Naive thymus-derived CD4-positive, alpha-beta T cell (primary cell): ENCODE measurements at regions of chr12 and their contacts with region 1.

Region 1: GRCh38 chr12:53065975-53066931 is 12.9 kb downstream of the SPRYD3 start:
- DNase-seq: peak; percentile 36 to 72 (median 51)
- ATAC-seq: peak; percentile 80
- H3K4me3 ChIP-seq: no peak overlapping the region
- H3K4me3 Mint-ChIP-seq: no peak overlapping the region
- H3K27ac ChIP-seq: no peak overlapping the region
- H3K27ac Mint-ChIP-seq: peak overlapping the region in 4 of 9 donors; percentile 26 to 74 (median 50)
- H3K4me1 ChIP-seq: peaks cover 0 to 3% of the 10 kb centered on the region in 2 donors
- H3K4me1 Mint-ChIP-seq: peaks cover 0 to 21% (median 11%) of the 10 kb centered on the region in 7 donors
- H3K27me3 ChIP-seq: no peaks in the 10 kb centered on the region
- H3K27me3 Mint-ChIP-seq: no peaks in the 10 kb centered on the region

Region 2: GRCh38 chr12:53047221-53048042 is 18.8 kb before region 1 on chr12:
- CTCF ChIA-PET with region 1: interaction called, 5 read pairs
- POLR2A ChIA-PET with region 1: interaction called, 3 read pairs
- intact Hi-C with region 1: loop called in 1 of 2 experiments (anchors 2 kb)
- DNase-seq: peak; percentile 53 to 86 (median 70)
- ATAC-seq: peak; percentile 91
- H3K4me3 ChIP-seq: peak overlapping the region; percentile 82
- H3K4me3 Mint-ChIP-seq: peak overlapping the region in 9 of 10 donors; percentile 43 to 95 (median 76)
- H3K27ac ChIP-seq: peak overlapping the region; percentile 78
- H3K27ac Mint-ChIP-seq: peak overlapping the region in 6 of 9 donors; percentile 12 to 92 (median 82)
- H3K4me1 ChIP-seq: peaks cover 7 to 9% of the 10 kb centered on the region in 2 donors
- H3K4me1 Mint-ChIP-seq: peaks cover 0 to 24% (median 13%) of the 10 kb centered on the region in 7 donors
- H3K27me3 ChIP-seq: no peaks in the 10 kb centered on the region
- H3K27me3 Mint-ChIP-seq: peaks cover 0 to 13% (median 0%) of the 10 kb centered on the region in 5 donors

Region 3: GRCh38 chr12:53079226-53080117 is 13.2 kb after region 1 on chr12 and contains the start of gene SPRYD3:
- CTCF ChIA-PET with region 1: interaction called, 27 read pairs
- POLR2A ChIA-PET with region 1: interaction called, 12 read pairs
- intact Hi-C with region 1: loop called (anchors 1 kb)
- DNase-seq: peak; percentile 96 to 99 (median 97)
- ATAC-seq: peak; percentile 99
- H3K4me3 ChIP-seq: peak within 1 kb of the TSS; percentile 95
- H3K4me3 Mint-ChIP-seq: peak within 1 kb of the TSS; percentile 90 to 98 (median 92)
- H3K27ac ChIP-seq: peak within 1 kb of the TSS; percentile 93
- H3K27ac Mint-ChIP-seq: peak within 1 kb of the TSS; percentile 95 to 98 (median 96)
- H3K4me1 ChIP-seq: peaks cover 10 to 14% of the 10 kb centered on the region in 2 donors
- H3K4me1 Mint-ChIP-seq: peaks cover 26 to 53% (median 40%) of the 10 kb centered on the region in 7 donors
- H3K27me3 ChIP-seq: no peaks in the 10 kb centered on the region
- H3K27me3 Mint-ChIP-seq: peaks cover 0 to 3% (median 0%) of the 10 kb centered on the region in 5 donors
- total RNA-seq, gene SPRYD3: 33.0 to 48.0 (median 36.4) TPM

Region 4: GRCh38 chr12:53205747-53206419 is 139.6 kb after region 1 on chr12:
- CTCF ChIA-PET with region 1: interaction called, 3 read pairs
- POLR2A ChIA-PET with region 1: no interaction called
- intact Hi-C with region 1: loop called in 1 of 2 experiments (anchors 5 kb)
- DNase-seq: peak in 1 of 9 donors; percentile 75
- ATAC-seq: peak; percentile 68
- H3K4me3 ChIP-seq: peak overlapping the region; percentile 84
- H3K4me3 Mint-ChIP-seq: peak overlapping the region; percentile 83 to 92 (median 86)
- H3K27ac ChIP-seq: peak overlapping the region; percentile 85
- H3K27ac Mint-ChIP-seq: peak overlapping the region; percentile 61 to 90 (median 87)
- H3K4me1 ChIP-seq: peaks cover 63 to 73% of the 10 kb centered on the region in 2 donors
- H3K4me1 Mint-ChIP-seq: peaks cover 53 to 84% (median 71%) of the 10 kb centered on the region in 7 donors
- H3K27me3 ChIP-seq: no peaks in the 10 kb centered on the region
- H3K27me3 Mint-ChIP-seq: no peaks in the 10 kb centered on the region

Region 5: GRCh38 chr12:53344824-53345485 is 278.7 kb after region 1 on chr12:
- CTCF ChIA-PET with region 1: interaction called, 4 read pairs
- POLR2A ChIA-PET with region 1: no interaction called
- intact Hi-C with region 1: loop called in 1 of 2 experiments (anchors 1 kb)
- DNase-seq: peak; percentile 42 to 68 (median 63)
- ATAC-seq: peak; percentile 89
- H3K4me3 ChIP-seq: peak overlapping the region; percentile 79
- H3K4me3 Mint-ChIP-seq: peak overlapping the region; percentile 91 to 100 (median 97)
- H3K27ac ChIP-seq: peak overlapping the region; percentile 66
- H3K27ac Mint-ChIP-seq: peak overlapping the region; percentile 87 to 96 (median 91)
- H3K4me1 ChIP-seq: peaks cover 0 to 10% of the 10 kb centered on the region in 2 donors
- H3K4me1 Mint-ChIP-seq: peaks cover 11 to 25% (median 17%) of the 10 kb centered on the region in 7 donors
- H3K27me3 ChIP-seq: no peaks in the 10 kb centered on the region
- H3K27me3 Mint-ChIP-seq: peaks cover 0 to 13% (median 0%) of the 10 kb centered on the region in 5 donors